ENCODE measurements at regions of chr6 and their contacts with region 1.

Region 1: GRCh38 chr6:16183187-16183664 is 54.3 kb downstream of the MYLIP start:
- DNase-seq: peak; percentile 65
- H3K4me3 ChIP-seq: no peak overlapping the region
- H3K27ac ChIP-seq: no peak overlapping the region
- H3K4me1 ChIP-seq: no peaks in the 10 kb centered on the region
- H3K27me3 ChIP-seq: peaks cover 14% of the 10 kb centered on the region in 2 experiments
- CTCF ChIP-seq: peak; percentile 43 to 46
- POLR2A ChIP-seq: no peak

Region 2: DNA sequence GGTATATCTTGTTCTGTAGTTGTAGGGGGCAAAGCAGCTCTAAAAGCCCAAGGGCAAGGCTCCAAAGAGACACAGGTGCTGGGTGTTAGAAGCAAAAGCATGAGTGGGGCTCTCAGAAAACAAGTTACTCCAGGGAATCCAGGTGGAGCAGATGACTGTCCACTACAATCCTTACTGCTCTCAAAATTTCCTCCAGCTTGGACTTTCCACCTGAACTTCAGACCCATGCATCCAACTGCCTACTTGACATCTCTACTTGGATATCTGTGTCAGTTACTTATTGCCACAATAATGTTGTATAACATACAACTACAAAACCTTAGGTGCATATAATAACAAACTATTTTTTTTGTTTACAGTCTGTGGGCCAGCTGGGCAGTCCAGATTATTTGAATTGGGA is 497.6 kb before region 1 on chr6:
- CTCF ChIA-PET with region 1: interaction called, 22 read pairs
- POLR2A ChIA-PET with region 1: no interaction called
- dilution Hi-C with region 1: no loop called
- intact Hi-C with region 1: no loop called
- DNase-seq: no peak
- H3K4me3 ChIP-seq: no peak overlapping the region
- H3K27ac ChIP-seq: no peak overlapping the region
- H3K4me1 ChIP-seq: peaks cover 2% of the 10 kb centered on the region
- H3K27me3 ChIP-seq: peaks cover 7 to 12% of the 10 kb centered on the region in 2 experiments
- CTCF ChIP-seq: no peak
- POLR2A ChIP-seq: no peak

Region 3: DNA sequence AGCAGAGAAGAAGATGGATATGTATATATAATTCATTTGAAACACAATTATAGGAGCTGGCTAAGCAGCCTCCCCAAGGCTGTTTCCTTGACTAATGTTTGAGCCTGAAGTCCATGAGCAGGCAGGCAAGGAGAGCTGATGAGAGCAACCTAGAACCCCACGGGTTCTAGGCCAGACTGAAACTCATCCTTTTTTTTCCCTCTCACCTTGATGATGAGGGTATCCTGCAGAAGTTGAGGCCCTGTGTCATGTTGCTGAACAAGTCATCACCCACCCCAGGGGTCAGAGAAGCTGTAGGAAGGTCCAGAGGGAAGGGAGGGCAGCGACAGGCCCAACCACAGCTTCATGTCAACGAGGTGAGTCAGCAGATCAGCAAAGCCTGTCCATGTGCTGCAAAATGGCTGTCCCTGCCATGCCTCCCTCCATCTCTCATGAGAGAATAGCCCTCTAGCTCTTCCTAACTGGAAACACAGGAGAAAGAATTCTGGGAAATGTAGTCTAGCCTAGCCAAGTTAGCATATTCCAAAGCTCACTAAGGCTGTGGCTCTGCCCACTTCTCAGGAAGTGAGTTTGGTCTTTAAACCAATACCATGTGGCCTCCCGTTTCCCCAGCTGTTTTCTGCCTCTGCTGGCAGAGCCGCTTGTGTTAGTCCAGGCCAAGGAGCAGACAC is 429.1 kb before region 1 on chr6:
- CTCF ChIA-PET with region 1: interaction called, 16 read pairs
- POLR2A ChIA-PET with region 1: no interaction called
- dilution Hi-C with region 1: no loop called
- intact Hi-C with region 1: no loop called
- DNase-seq: no peak
- H3K4me3 ChIP-seq: no peak overlapping the region
- H3K27ac ChIP-seq: no peak overlapping the region
- H3K4me1 ChIP-seq: no peaks in the 10 kb centered on the region
- H3K27me3 ChIP-seq: peaks cover 0 to 3% of the 10 kb centered on the region in 2 experiments
- CTCF ChIP-seq: no peak
- POLR2A ChIP-seq: no peak

Region 4: DNA sequence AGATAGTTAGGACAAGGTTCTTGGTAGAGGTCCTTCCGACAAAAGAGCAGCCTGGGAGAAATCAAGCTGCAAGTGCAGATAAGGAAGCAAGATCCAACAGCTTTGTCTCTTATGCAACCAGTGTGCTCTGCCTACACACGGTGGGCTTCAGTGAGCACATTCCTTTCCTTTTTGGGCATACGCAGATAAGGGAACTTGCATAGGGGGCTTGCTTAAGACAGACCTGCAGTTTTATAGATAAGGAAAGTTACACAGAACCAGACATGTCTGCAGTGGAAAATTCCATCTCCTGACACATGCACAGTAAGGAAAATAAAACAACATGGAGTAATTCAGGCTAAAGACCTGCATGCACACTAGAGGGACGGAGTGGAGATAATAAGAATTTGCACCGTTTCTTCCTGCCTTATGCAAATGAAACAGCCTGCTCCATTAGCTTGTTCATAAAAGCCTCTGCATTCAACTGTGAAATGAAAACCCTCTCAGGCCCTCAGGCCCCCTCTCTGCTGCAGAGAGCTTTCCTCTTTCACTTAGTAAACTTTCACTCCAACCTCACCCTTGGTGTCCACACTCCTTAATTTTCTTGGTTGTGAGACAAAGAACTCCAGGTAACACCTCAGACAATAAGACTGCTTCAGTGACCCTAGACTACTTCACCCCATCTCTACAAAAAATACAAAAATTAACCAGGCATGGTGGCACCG is 151.8 kb before region 1 on chr6:
- CTCF ChIA-PET with region 1: no interaction called
- POLR2A ChIA-PET with region 1: no interaction called
- dilution Hi-C with region 1: no loop called
- intact Hi-C with region 1: loop called (anchors 10 kb)
- DNase-seq: no peak
- H3K4me3 ChIP-seq: no peak overlapping the region
- H3K27ac ChIP-seq: no peak overlapping the region
- H3K4me1 ChIP-seq: no peaks in the 10 kb centered on the region
- H3K27me3 ChIP-seq: no peaks in the 10 kb centered on the region
- CTCF ChIP-seq: no peak
- POLR2A ChIP-seq: no peak

Region 5: GRCh38 chr6:16168858-16169257 is 14.4 kb before region 1 on chr6:
- CTCF ChIA-PET with region 1: interaction called, 38 read pairs
- POLR2A ChIA-PET with region 1: no interaction called
- dilution Hi-C with region 1: no loop called
- intact Hi-C with region 1: no loop called
- DNase-seq: peak; percentile 79
- H3K4me3 ChIP-seq: no peak overlapping the region
- H3K27ac ChIP-seq: no peak overlapping the region
- H3K4me1 ChIP-seq: no peaks in the 10 kb centered on the region
- H3K27me3 ChIP-seq: peaks cover 3% of the 10 kb centered on the region in 2 experiments
- CTCF ChIP-seq: peak; percentile 27 to 67
- POLR2A ChIP-seq: no peak

Region 6: GRCh38 chr6:16277101-16277981 is 94.1 kb after region 1 on chr6:
- CTCF ChIA-PET with region 1: no interaction called
- POLR2A ChIA-PET with region 1: no interaction called
- dilution Hi-C with region 1: no loop called
- intact Hi-C with region 1: loop called (anchors 1 kb)
- DNase-seq: peak; percentile 96
- H3K4me3 ChIP-seq: no peak overlapping the region
- H3K27ac ChIP-seq: peak overlapping the region; percentile 73
- H3K4me1 ChIP-seq: peaks cover 9% of the 10 kb centered on the region
- H3K27me3 ChIP-seq: no peaks in the 10 kb centered on the region
- CTCF ChIP-seq: peak; percentile 79 to 80
- POLR2A ChIP-seq: no peak

Measured in endothelial cell of umbilical vein (primary cell).